Activated CD4-positive, alpha-beta T cell treated with anti-CD3 and anti-CD28 coated beads, Interleukin-2, amount 10 ng/mL, durations not matched to agents 24 days and 14 days (primary cell): ENCODE measurements at regions of chr10 and their contacts with region 1.

Region 1: GRCh38 chr10:60733189-60733822 is 45.0 kb upstream of the CDK1 start:
- DNase-seq: peak; percentile 88
- H3K4me3 Mint-ChIP-seq: peak overlapping the region; percentile 81
- H3K27ac Mint-ChIP-seq: peak overlapping the region; percentile 49
- H3K4me1 Mint-ChIP-seq: peaks cover 39% of the 10 kb centered on the region
- H3K27me3 Mint-ChIP-seq: peaks cover 2% of the 10 kb centered on the region

Region 2: DNA sequence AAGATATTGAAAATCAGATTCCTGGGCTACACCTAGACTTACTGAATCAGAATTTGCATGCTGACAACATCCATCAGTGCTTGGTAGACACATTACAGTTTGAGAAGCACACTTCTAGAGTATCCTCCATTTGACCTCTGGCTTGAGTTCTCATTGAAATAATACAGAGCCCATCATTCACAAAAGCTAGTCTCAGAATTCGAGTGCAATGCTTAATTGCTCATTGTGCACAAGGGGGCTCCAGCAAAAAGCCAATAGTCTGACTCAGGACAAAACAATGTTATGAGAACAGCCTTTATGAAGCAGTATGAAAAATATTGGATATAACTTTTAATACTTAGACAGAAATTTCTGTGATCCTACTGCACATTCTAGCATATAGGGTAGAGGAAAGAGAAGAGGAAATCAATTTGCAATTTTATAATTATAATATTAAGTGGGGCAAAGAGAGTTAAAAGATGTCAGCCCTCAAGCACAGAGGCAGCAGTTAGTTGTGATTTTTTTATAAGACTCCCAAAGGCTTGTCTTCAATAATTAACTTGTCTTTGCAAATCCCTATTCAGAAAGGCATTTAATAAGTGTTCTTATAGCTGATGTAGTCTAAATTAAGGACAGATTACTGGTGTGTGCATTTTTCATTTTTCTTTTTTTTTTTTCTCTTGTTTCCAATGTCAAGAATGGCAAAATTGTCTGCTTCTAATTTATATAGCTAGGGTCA is 237.8 kb before region 1 on chr10:
- intact Hi-C with region 1: no loop called
- DNase-seq: no peak
- H3K4me3 Mint-ChIP-seq: no peak overlapping the region
- H3K27ac Mint-ChIP-seq: no peak overlapping the region
- H3K4me1 Mint-ChIP-seq: peaks cover 7% of the 10 kb centered on the region
- H3K27me3 Mint-ChIP-seq: no peaks in the 10 kb centered on the region

Region 3: GRCh38 chr10:60666221-60666620 is 67.1 kb before region 1 on chr10:
- intact Hi-C with region 1: loop called (anchors 5 kb)
- DNase-seq: no peak
- H3K4me3 Mint-ChIP-seq: no peak overlapping the region
- H3K27ac Mint-ChIP-seq: no peak overlapping the region
- H3K4me1 Mint-ChIP-seq: peaks cover 19% of the 10 kb centered on the region
- H3K27me3 Mint-ChIP-seq: no peaks in the 10 kb centered on the region

Region 4: GRCh38 chr10:60747817-60748469 is 14.6 kb after region 1 on chr10:
- intact Hi-C with region 1: no loop called
- DNase-seq: no peak
- H3K4me3 Mint-ChIP-seq: no peak overlapping the region
- H3K27ac Mint-ChIP-seq: no peak overlapping the region
- H3K4me1 Mint-ChIP-seq: peaks cover 4% of the 10 kb centered on the region
- H3K27me3 Mint-ChIP-seq: peaks cover 16% of the 10 kb centered on the region

Region 5: DNA sequence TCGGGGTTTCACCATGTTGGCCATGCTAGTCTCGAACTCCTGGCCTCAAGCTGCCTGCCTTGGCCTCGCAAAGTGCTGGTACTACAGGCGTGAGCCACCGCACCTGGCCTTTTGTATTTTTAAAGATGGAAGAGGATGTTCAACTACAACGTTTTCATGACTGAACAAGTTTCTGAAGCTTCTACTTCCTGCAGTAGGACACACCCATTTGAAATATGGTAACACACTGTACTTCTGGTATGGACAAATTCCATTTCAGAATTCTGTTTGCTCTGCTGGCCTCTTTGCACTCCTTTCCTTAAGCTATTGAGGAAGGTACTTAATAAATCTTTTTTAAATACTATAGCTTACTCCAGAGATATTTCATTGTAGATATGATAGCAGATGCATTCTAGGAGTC is 34.1 kb after region 1 on chr10:
- intact Hi-C with region 1: no loop called
- DNase-seq: no peak
- H3K4me3 Mint-ChIP-seq: no peak overlapping the region
- H3K27ac Mint-ChIP-seq: no peak overlapping the region
- H3K4me1 Mint-ChIP-seq: peaks cover 20% of the 10 kb centered on the region
- H3K27me3 Mint-ChIP-seq: peaks cover 5% of the 10 kb centered on the region

Region 6: GRCh38 chr10:60778214-60779029 is 45.1 kb after region 1 on chr10 and contains the start of gene CDK1:
- intact Hi-C with region 1: loop called (anchors 1 kb)
- DNase-seq: peak; percentile 99
- H3K4me3 Mint-ChIP-seq: peak within 1 kb of the TSS; percentile 99
- H3K27ac Mint-ChIP-seq: peak within 1 kb of the TSS; percentile 99
- H3K4me1 Mint-ChIP-seq: peaks cover 32% of the 10 kb centered on the region
- H3K27me3 Mint-ChIP-seq: peaks cover 2% of the 10 kb centered on the region
- total RNA-seq, gene CDK1: 101 and 105 TPM in 2 replicates